Uterus (tissue), 4 donors: ENCODE measurements at regions of chr5 and their contacts with region 1.

Region 1: DNA sequence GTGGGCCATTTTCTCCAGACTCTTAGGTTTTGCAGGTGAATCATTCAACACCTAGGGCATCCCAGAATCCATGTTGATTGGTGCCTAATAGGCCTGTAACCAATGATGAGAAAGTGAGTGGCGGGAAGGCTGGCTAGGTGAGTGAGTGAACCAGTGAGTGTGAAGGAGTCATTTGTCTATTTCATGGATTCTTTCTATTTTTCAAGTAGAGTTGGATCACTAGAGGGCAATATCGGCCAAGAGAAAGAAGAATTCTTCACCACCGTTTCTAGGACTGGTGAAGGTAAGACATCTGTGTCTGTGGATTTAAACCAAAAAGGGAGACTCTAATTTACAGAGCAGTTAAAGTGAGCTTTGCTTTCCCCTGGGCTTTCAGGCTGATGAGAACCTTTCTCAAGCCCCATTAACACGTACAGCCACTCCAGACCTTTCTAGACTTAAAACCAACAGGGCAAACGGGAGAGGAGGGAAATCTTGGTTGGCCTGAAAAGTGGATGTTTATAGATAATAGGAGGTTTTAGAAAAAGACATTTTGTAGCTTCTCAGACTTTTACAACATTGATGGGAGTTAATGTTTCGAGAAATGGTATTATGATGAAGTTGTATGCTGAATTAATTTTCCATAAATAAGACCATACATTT is 114.3 kb upstream of the IL12B start:
- DNase-seq: no peak
- H3K4me3 ChIP-seq: no peak overlapping the region
- H3K27ac ChIP-seq: no peak overlapping the region
- H3K4me1 ChIP-seq: no peaks in the 10 kb centered on the region
- H3K27me3 ChIP-seq: no peaks in the 10 kb centered on the region
- CTCF ChIP-seq: peak; percentile 55 to 80 (median 63)
- POLR2A ChIP-seq: no peak

Region 2: GRCh38 chr5:159073026-159073425 is 371.5 kb before region 1 on chr5:
- intact Hi-C with region 1: no loop called
- DNase-seq: no peak
- H3K4me3 ChIP-seq: no peak overlapping the region
- H3K27ac ChIP-seq: peak overlapping the region; percentile 48 to 65
- H3K4me1 ChIP-seq: no peaks in the 10 kb centered on the region
- H3K27me3 ChIP-seq: no peaks in the 10 kb centered on the region
- CTCF ChIP-seq: no peak
- POLR2A ChIP-seq: no peak

Region 3: GRCh38 chr5:159987031-159987674 is 542.6 kb after region 1 on chr5:
- intact Hi-C with region 1: loop called (anchors 10 kb)
- DNase-seq: peak; percentile 70 to 75
- H3K4me3 ChIP-seq: peak overlapping the region; percentile 16 to 44
- H3K27ac ChIP-seq: no peak overlapping the region
- H3K4me1 ChIP-seq: no peaks in the 10 kb centered on the region
- H3K27me3 ChIP-seq: peaks cover 0 to 7% of the 10 kb centered on the region in 2 donors
- CTCF ChIP-seq: peak; percentile 67 to 78 (median 72)
- POLR2A ChIP-seq: peak in 1 of 2 donors; percentile 12